Left colon (tissue), 2 donors: ENCODE measurements at regions of chr9 and their contacts with region 1.

Region 1: DNA sequence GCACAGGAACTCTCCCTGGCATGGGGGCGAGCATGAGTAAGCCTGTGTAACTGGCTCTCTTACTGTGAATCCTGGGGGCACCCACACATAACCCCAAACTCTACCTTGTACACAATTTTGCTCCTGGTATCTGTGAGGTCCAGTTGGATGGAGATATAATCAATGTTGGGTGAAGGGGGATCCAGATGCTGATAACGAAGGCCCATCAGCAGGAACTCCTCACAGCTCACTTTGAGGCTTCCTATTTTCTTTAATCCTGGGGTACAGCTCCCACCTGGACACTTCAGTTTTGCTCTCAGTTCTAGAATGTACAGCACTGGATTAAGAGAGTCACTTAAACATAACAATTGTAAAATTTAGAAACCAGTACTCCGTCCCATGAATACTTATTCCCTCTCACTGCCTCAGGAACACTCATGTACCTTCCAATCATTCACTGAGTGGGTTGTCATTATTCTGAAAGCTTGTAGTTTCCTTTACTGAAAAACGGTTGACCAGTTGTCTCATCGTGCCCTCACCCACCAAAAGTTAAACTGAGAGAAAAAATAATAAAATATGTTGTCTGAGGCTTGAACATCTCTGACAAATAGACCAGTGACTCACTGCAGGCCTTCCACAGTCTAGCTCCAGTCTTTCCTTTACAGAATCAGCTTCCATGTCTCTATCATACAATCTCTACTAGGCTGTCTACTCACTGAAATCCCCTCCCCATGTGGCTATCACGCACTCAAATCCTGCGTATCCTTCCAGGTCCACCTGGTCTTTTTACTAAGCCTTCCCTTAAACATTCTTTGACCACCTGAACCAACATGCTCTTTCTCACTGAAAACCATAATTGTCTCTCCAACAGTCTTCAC is 52.6 kb downstream of the FREM1 start:
- DNase-seq: no peak
- ATAC-seq: no peak

Region 2: GRCh38 chr9:15135164-15135792 is 277.6 kb after region 1 on chr9:
- intact Hi-C with region 1: loop called in 1 of 2 experiments (anchors 10 kb)
- DNase-seq: peak; percentile 25 to 27
- ATAC-seq: peak; percentile 82